ENCODE measurements at regions of chr6 and their contacts with region 1.

Region 1: DNA sequence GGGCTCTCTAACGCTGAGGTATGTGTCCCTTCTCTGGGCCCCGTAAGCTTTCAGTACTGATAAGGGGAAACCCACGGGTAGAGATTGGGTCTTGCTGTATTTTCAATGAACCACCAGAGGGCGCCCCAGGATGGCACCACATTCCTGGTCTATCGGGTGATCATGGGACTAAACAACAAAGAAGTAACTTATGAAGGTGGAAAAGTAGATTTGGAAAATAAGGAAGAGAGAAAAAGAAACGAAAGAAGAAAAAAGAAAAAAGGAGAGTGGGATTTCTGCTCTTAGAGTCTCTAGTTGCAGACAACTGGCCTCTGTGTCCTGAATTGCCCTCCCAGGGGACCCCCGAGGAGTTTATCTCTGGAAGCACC is 93.8 kb downstream of the GMPR start:
- H3K4me3 Mint-ChIP-seq: no peak overlapping the region
- H3K27ac Mint-ChIP-seq: no peak overlapping the region
- H3K4me1 Mint-ChIP-seq: peaks cover 27% of the 10 kb centered on the region
- H3K27me3 Mint-ChIP-seq: no peaks in the 10 kb centered on the region

Region 2: DNA sequence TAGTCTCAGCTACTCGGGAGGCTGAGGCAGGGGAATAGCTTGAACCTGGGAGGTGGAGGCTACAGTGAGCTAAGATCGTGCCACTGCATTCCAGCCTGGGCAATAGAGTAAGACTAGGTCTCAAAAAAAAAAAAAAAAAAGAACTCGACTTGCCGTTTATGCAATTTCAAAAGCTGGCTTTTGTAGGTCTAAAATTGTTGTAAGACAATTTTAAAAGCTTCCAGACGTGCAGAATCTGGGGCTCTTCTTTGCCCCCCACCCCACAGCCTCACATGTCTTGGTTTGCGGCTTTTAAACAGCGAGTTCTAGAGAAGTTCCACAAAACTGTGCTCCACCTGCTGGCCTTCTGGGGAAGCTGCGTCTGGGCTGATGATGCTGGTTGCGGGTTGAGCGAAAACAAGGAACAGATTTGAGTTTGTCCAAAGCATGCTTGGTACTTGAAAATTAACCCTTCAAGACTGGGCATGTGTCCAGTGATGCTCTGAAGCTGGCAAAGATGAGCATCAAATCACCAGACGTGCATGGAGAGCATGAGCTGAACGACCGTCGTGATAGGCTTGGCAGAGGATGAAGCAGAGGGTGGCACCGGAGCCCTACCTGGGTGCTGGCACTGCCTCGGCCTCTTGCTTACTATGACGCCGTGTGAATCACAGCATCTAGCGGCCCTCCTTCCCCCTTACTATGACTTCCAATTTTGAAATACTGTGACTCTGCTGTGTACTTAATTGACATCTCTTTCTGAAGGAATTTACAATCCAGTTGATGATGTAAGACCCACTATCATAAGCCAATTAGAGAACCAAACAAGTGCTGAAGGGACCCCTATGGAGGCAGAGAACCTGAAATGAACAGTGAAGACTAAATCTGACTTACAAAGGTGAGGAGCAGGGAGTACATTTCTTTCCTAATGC is 77.6 kb after region 1 on chr6:
- intact Hi-C with region 1: loop called (anchors 1 kb)
- H3K4me3 Mint-ChIP-seq: no peak overlapping the region
- H3K27ac Mint-ChIP-seq: peak overlapping the region; percentile 41
- H3K4me1 Mint-ChIP-seq: peaks cover 62% of the 10 kb centered on the region
- H3K27me3 Mint-ChIP-seq: no peaks in the 10 kb centered on the region

Region 3: DNA sequence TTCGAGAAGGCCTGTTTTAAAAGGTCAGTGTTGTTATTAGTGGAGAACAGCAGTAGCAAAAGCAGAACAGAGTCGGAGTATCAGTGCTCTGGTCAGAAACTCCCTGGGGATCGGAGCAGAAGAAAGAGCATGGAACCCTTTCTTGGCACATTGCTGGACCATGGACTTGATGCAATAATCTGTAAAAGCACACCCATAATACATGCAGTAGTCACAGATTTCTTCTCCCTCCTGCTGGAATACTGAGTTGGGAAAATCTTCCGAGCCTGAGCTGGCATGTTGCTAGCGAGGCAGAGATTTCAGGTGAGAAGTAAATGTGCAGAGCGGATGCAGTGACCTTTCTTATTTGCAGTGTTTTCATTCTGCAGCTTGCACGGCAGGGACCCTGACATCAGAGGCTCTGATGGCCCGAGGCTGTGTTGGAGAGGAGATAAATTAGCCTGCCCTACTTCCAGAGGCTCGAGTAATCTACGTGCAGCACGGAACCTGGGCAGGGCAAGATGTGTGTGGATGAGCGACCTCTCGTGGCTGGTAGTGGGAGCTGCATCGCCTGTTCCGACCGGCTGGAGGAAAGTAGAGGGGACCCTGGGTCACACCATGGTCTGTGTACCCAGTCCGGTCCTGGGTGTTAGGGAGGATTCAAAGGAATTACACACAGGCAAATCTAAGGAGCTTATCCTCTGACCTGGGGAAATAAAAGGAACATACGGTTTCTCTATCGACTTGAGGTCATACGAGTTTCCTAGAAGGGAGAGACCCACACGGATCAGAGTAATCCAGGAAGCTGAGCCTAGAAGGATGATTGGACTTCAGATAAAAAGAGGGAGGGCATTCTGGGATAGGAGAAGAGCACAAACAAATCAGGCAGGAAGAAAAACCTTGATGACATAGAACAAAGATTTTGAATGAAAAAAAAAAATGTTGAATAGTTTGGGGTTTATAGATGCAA is 632.7 kb after region 1 on chr6:
- intact Hi-C with region 1: loop called (anchors 10 kb)
- H3K4me3 Mint-ChIP-seq: peak overlapping the region; percentile 21
- H3K27ac Mint-ChIP-seq: peak overlapping the region; percentile 47
- H3K4me1 Mint-ChIP-seq: peaks cover 20% of the 10 kb centered on the region
- H3K27me3 Mint-ChIP-seq: peaks cover 13% of the 10 kb centered on the region

Region 4: GRCh38 chr6:17086469-17086868 is 754.3 kb after region 1 on chr6:
- intact Hi-C with region 1: loop called (anchors 2 kb)
- H3K4me3 Mint-ChIP-seq: no peak overlapping the region
- H3K27ac Mint-ChIP-seq: no peak overlapping the region
- H3K4me1 Mint-ChIP-seq: no peaks in the 10 kb centered on the region
- H3K27me3 Mint-ChIP-seq: peaks cover 19% of the 10 kb centered on the region

Measured in dendritic cell treated with granulocyte-macrophage colony-stimulating factor and Interleukin-4, amounts not matched to agents 40 ng/mL and 50 ng/mL, for 4 days (primary cell).